Natural killer cell (primary cell): ENCODE measurements at regions of chr13 and their contacts with region 1.

Region 1: GRCh38 chr13:95191821-95192563 is 109.3 kb downstream of the ABCC4 start:
- DNase-seq: peak; percentile 33 to 72
- ATAC-seq: peak in 2 of 3 donors; percentile 51 to 58
- H3K4me3 ChIP-seq: no peak overlapping the region
- H3K4me3 Mint-ChIP-seq: no peak overlapping the region
- H3K27ac ChIP-seq: no peak overlapping the region
- H3K27ac Mint-ChIP-seq: no peak overlapping the region
- H3K4me1 ChIP-seq: no peaks in the 10 kb centered on the region
- H3K4me1 Mint-ChIP-seq: peaks cover 5 to 6% of the 10 kb centered on the region in 2 donors
- H3K27me3 ChIP-seq: no peaks in the 10 kb centered on the region
- H3K27me3 Mint-ChIP-seq: no peaks in the 10 kb centered on the region
- CTCF ChIP-seq: peak; percentile 57

Region 2: DNA sequence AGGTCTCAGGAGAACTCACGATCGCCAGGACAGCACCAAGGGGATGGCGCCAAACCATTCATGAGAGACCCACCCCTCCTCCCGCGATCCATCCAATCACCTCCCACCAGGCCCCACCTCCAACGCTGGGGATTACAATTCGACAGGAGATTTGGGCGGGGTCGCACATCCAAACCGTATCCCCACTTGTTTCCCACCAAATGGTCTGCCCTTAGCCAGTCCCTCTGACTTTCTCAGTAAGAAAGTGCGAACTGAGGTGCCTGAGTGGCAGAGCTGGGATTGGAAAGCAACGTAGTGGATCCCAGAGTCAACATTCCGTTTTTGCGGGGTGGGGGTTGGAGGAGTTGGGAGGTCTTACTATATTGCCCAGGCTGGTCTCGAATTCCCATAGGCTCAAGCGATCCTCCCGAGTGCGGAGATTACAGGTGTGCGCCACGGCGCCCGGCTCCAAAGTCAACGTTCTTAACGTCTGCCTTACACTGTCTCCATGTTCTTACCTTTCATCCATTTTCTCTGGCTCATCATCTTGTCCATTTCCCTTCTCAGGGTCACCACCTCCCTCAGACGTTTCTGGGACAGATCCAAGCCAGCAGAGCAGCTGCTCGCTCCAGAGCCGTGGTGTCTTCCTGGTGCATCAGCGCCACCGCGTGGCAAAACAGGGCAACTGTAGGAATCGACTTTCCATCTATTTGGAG is 212.0 kb after region 1 on chr13:
- intact Hi-C with region 1: loop called (anchors 1 kb)
- DNase-seq: peak; percentile 68 to 87
- ATAC-seq: peak; percentile 86 to 97 (median 97)
- H3K4me3 ChIP-seq: peak overlapping the region; percentile 16
- H3K4me3 Mint-ChIP-seq: peak overlapping the region; percentile 78
- H3K27ac ChIP-seq: no peak overlapping the region
- H3K27ac Mint-ChIP-seq: peak overlapping the region in 1 of 2 donors; percentile 2
- H3K4me1 ChIP-seq: peaks cover 8% of the 10 kb centered on the region
- H3K4me1 Mint-ChIP-seq: peaks cover 5 to 12% of the 10 kb centered on the region in 2 donors
- H3K27me3 ChIP-seq: no peaks in the 10 kb centered on the region
- H3K27me3 Mint-ChIP-seq: peaks cover 6 to 7% of the 10 kb centered on the region in 2 donors
- CTCF ChIP-seq: peak; percentile 96